Heart right ventricle (tissue), 16 donors: ENCODE measurements at regions of chr6 and their contacts with region 1.

Region 1: GRCh38 chr6:34248727-34249551 is at the start of gene SMIM29:
- DNase-seq: peak; percentile 97
- ATAC-seq: peak; percentile 89 to 97 (median 94)
- H3K4me3 ChIP-seq: peak within 1 kb of the TSS; percentile 60 to 96 (median 86)
- H3K27ac ChIP-seq: peak within 1 kb of the TSS; percentile 68 to 98 (median 95)
- H3K4me1 ChIP-seq: peaks cover 9 to 39% (median 28%) of the 10 kb centered on the region in 9 donors
- H3K27me3 ChIP-seq: no peaks in the 10 kb centered on the region
- CTCF ChIP-seq: peak; percentile 91 to 100 (median 97)
- total RNA-seq, gene SMIM29: 16.0 to 29.1 (median 24.2) TPM

Region 2: DNA sequence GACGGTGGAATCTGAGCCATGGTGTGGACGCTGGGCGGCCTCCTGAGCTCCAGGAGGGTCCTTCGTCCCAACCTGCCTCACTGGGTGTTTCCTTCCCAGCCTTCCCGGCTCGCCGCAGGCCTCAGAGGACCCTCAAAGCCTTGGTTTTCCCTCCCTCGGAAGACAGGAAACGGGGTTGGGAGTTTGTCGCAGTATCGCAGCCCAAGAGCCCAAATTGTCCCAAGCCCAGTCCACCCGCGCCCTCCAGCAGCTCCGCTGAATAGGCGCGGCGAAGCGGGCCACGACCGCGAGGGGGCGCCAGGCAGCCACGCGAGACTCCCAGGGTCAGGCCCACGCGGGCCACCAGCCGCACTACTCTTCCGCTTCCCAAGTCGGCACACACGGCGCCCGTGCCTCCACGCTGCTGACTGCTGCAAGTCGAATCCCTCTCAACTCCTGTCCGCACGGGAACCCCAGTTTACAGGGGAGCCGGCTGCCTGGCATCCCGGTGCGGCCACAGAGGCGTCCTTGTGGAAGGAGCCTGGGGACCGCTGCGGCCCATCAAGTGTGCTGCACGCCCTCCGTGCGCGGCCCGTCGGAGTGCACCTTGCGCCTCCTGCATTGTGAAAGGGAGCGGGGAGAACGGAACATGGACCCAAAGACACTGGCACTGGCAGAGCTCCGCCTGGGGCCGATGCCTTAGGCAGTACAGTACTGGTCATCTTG is 52.7 kb before region 1 on chr6:
- intact Hi-C with region 1: loop called in 7 of 10 experiments (anchors 2 to 5 kb)
- DNase-seq: peak; percentile 85 to 92
- ATAC-seq: peak; percentile 98 to 99 (median 99)
- H3K4me3 ChIP-seq: peak overlapping the region in 9 of 10 donors; percentile 41 to 72 (median 56)
- H3K27ac ChIP-seq: peak overlapping the region in 1 of 10 donors; percentile 26
- H3K4me1 ChIP-seq: peaks cover 0 to 10% (median 5%) of the 10 kb centered on the region in 9 donors
- H3K27me3 ChIP-seq: peaks cover 0 to 4% (median 0%) of the 10 kb centered on the region in 7 donors
- CTCF ChIP-seq: peak; percentile 95 to 99 (median 98)

Region 3: GRCh38 chr6:34223956-34224940 is 24.7 kb before region 1 on chr6:
- intact Hi-C with region 1: loop called in 1 of 10 experiments (anchors 2 kb)
- DNase-seq: peak; percentile 91 to 93
- ATAC-seq: peak; percentile 97 to 99 (median 98)
- H3K4me3 ChIP-seq: peak overlapping the region; percentile 35 to 91 (median 70)
- H3K27ac ChIP-seq: peak overlapping the region; percentile 48 to 94 (median 90)
- H3K4me1 ChIP-seq: peaks cover 0 to 27% (median 13%) of the 10 kb centered on the region in 9 donors
- H3K27me3 ChIP-seq: no peaks in the 10 kb centered on the region
- CTCF ChIP-seq: no peak

Region 4: GRCh38 chr6:34392497-34393190 is 143.7 kb after region 1 on chr6 and contains the start of gene NUDT3:
- intact Hi-C with region 1: loop called (anchors 1 to 5 kb)
- DNase-seq: peak; percentile 94 to 96
- ATAC-seq: peak; percentile 92 to 96 (median 95)
- H3K4me3 ChIP-seq: peak within 1 kb of the TSS; percentile 70 to 95 (median 88)
- H3K27ac ChIP-seq: peak within 1 kb of the TSS; percentile 88 to 99 (median 98)
- H3K4me1 ChIP-seq: peaks cover 13 to 54% (median 42%) of the 10 kb centered on the region in 9 donors
- H3K27me3 ChIP-seq: no peaks in the 10 kb centered on the region
- CTCF ChIP-seq: peak; percentile 66 to 97 (median 87)
- total RNA-seq, gene NUDT3: 41.9 to 67.1 (median 59.0) TPM

Region 5: GRCh38 chr6:34491091-34491430 is 242.1 kb after region 1 on chr6:
- intact Hi-C with region 1: no loop called
- DNase-seq: no peak
- ATAC-seq: peak in 1 of 8 donors; percentile 14
- H3K4me3 ChIP-seq: no peak overlapping the region
- H3K27ac ChIP-seq: no peak overlapping the region
- H3K4me1 ChIP-seq: no peaks in the 10 kb centered on the region
- H3K27me3 ChIP-seq: no peaks in the 10 kb centered on the region
- CTCF ChIP-seq: no peak

Region 6: DNA sequence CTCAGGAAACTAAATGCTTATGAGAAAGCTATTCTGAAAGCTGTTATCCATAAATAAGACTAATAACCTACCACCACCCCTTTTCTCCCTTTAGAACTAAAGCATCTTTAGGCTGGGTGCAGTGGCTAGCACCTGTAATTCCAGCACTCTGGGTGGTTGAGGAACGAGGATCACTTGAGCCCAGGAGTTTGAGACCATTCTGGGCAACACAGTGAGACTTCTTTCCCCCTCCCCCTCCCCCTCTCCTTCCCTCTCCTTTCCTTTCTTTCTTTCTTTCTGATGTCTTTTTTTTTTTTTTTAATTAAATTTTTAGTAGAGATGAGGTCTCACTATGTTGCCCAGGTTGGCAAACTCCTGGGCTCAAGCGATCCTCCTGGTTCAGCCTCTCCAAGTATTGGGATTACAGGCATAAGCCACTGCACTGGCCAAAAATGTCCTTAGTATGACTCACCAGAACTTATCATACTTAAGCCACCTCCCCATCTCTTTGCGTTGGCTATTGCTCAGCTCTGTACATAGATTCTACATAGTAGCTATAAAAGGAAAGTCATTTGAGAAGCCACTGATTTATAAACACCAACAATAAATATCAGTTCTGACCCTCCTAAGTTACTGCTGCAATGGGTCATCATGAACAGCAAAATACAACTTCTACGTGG is 362.0 kb after region 1 on chr6:
- intact Hi-C with region 1: loop called in 1 of 10 experiments (anchors 5 kb)
- DNase-seq: no peak
- ATAC-seq: peak in 3 of 8 donors; percentile 4 to 62 (median 46)
- H3K4me3 ChIP-seq: no peak overlapping the region
- H3K27ac ChIP-seq: peak overlapping the region in 3 of 10 donors; percentile 11 to 64 (median 35)
- H3K4me1 ChIP-seq: peaks cover 0 to 32% (median 23%) of the 10 kb centered on the region in 9 donors
- H3K27me3 ChIP-seq: no peaks in the 10 kb centered on the region
- CTCF ChIP-seq: no peak